Common myeloid progenitor, CD34-positive (primary cell): ENCODE measurements at regions of chr11 and their contacts with region 1.

Region 1: DNA sequence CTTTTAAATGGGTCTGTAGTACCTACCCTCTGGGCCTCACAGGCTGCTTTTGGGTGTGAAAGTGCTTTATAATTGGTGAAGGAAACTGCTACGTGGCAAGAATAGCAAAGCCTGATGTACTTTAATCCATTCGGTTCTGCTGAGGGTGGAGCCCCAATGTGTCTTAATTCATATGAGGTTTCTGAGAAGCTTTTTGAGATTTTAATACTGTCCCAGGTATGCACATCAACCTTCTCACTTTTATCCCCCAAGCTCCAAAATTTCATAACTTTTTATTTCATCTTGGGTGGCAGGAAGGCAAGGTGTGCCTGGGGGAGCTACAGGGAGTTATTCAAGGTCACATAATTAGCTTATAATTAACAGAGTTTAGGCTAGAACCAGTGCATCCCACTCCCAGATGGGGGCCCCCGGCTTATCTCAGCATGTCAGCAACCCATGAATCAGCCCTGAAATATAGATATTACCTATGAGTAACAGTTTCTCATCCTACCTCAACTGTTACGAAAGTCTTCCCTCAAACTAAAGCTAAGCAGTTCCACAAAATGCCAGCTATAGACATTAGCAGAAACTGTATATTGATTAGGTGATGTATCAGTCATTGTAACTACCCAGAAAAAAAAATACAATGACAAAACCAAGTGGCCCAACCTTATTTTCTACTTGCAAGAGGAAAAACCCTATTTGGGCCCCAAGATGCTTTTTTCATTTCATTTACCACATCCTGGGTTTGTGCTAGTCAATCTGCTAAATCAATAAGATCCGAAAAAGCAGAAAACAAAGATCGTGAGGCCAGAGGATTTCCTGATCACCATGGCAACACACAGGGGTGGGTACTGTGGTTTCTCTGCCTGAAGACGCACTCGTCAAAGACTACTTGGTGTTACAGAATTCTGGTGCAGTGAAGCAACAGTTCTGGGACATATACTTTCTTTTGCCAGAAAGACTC is 26.7 kb downstream of the CD44 start:
- DNase-seq: peak; percentile 93 to 98 (median 98)
- H3K4me3 ChIP-seq: peak overlapping the region in 6 of 7 experiments; percentile 0 to 62 (median 32)
- H3K27ac ChIP-seq: peak overlapping the region; percentile 73 to 84
- H3K4me1 ChIP-seq: peaks cover 54 to 86% (median 75%) of the 10 kb centered on the region in 4 experiments
- H3K27me3 ChIP-seq: no peaks in the 10 kb centered on the region

Region 2: GRCh38 chr11:35145271-35145670 is 20.4 kb before region 1 on chr11:
- CTCF ChIA-PET with region 1: interaction called, 12 read pairs
- POLR2A ChIA-PET with region 1: interaction called, 3 read pairs
- DNase-seq: peak in 2 of 3 donors; percentile 62 to 63
- H3K4me3 ChIP-seq: peak overlapping the region in 1 of 7 experiments; percentile 31
- H3K27ac ChIP-seq: no peak overlapping the region
- H3K4me1 ChIP-seq: peaks cover 30 to 61% (median 55%) of the 10 kb centered on the region in 4 experiments
- H3K27me3 ChIP-seq: no peaks in the 10 kb centered on the region

Region 3: DNA sequence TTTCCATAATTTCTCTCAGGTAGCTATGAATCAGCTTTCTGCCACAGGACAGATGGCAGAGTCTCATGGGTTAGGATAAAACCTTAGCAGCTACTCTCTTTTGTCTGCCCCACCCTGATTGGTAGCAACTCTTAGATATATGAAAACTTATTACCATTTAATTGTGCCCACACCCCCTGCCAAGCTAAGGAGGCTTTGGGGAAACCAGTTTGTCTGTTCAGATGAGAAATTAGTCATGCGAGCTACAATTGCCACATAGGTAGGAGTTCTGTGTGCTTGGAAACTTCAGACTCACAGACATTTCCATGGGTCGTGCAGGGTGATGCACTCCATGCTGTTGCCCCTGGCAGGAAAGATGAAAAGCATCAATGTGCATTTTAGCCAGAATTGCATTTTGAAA is 13.2 kb after region 1 on chr11:
- CTCF ChIA-PET with region 1: interaction called, 26 read pairs
- POLR2A ChIA-PET with region 1: no interaction called
- DNase-seq: no peak
- H3K4me3 ChIP-seq: no peak overlapping the region
- H3K27ac ChIP-seq: no peak overlapping the region
- H3K4me1 ChIP-seq: peaks cover 7 to 20% (median 12%) of the 10 kb centered on the region in 4 experiments
- H3K27me3 ChIP-seq: no peaks in the 10 kb centered on the region